ENCODE measurements at regions of chr3 and their contacts with region 1.

Region 1: GRCh38 chr3:72847751-72848702 is at the start of gene SHQ1:
- DNase-seq: peak; percentile 98
- ATAC-seq: peak; percentile 90
- H3K4me3 Mint-ChIP-seq: peak within 1 kb of the TSS; percentile 99
- H3K27ac Mint-ChIP-seq: peak within 1 kb of the TSS; percentile 86
- H3K4me1 Mint-ChIP-seq: peaks cover 54% of the 10 kb centered on the region
- H3K27me3 Mint-ChIP-seq: peaks cover 1% of the 10 kb centered on the region
- total RNA-seq, gene SHQ1: 26.4 to 31.3 TPM

Region 2: DNA sequence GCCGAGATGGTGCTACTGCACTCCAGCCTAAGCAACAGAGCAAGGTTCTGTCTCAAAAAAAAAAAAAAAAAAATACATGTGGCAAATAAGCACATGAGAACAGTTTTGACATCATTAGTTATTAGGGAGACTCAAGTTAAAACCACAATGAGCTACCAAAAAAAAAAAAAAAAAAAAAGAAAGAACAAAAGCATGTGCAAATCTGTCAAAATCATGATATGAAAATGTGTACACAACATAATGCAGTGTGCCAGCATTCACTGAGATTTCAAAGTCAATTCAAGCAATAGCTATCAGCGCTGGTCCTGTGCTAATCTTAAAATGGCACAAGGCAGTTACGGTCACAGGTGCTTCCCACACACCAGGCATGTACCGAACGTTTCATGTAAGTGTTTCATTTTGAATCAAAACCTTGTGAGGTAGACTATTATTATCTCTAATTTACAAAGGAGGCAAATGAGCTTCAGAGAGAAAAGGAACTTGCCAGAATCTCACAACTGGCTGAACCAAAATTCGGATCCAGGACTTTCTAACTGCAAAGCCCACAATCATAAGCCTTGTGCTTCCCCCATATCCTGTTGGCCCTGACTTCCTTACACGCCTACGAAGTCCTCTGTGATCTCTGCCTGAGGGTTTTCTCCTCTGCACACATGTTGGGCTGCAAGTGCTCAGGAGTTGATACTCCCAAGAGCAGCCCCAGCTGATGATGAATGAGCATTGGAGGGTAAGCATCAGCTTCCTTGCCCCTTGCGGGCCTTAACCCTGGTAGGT is 863.0 kb before region 1 on chr3:
- CTCF ChIA-PET with region 1: no interaction called
- POLR2A ChIA-PET with region 1: no interaction called
- intact Hi-C with region 1: loop called in 1 of 2 experiments (anchors 2 kb)
- DNase-seq: peak; percentile 69
- ATAC-seq: peak; percentile 84
- H3K4me3 Mint-ChIP-seq: peak overlapping the region; percentile 1
- H3K27ac Mint-ChIP-seq: peak overlapping the region; percentile 64
- H3K4me1 Mint-ChIP-seq: peaks cover 47% of the 10 kb centered on the region
- H3K27me3 Mint-ChIP-seq: peaks cover 4% of the 10 kb centered on the region

Region 3: GRCh38 chr3:72482589-72483321 is 365.3 kb before region 1 on chr3:
- CTCF ChIA-PET with region 1: no interaction called
- POLR2A ChIA-PET with region 1: no interaction called
- intact Hi-C with region 1: loop called in 1 of 2 experiments (anchors 1 kb)
- DNase-seq: peak; percentile 94
- ATAC-seq: peak; percentile 46
- H3K4me3 Mint-ChIP-seq: peak overlapping the region; percentile 51
- H3K27ac Mint-ChIP-seq: peak overlapping the region; percentile 90
- H3K4me1 Mint-ChIP-seq: peaks cover 73% of the 10 kb centered on the region
- H3K27me3 Mint-ChIP-seq: no peaks in the 10 kb centered on the region

Region 4: DNA sequence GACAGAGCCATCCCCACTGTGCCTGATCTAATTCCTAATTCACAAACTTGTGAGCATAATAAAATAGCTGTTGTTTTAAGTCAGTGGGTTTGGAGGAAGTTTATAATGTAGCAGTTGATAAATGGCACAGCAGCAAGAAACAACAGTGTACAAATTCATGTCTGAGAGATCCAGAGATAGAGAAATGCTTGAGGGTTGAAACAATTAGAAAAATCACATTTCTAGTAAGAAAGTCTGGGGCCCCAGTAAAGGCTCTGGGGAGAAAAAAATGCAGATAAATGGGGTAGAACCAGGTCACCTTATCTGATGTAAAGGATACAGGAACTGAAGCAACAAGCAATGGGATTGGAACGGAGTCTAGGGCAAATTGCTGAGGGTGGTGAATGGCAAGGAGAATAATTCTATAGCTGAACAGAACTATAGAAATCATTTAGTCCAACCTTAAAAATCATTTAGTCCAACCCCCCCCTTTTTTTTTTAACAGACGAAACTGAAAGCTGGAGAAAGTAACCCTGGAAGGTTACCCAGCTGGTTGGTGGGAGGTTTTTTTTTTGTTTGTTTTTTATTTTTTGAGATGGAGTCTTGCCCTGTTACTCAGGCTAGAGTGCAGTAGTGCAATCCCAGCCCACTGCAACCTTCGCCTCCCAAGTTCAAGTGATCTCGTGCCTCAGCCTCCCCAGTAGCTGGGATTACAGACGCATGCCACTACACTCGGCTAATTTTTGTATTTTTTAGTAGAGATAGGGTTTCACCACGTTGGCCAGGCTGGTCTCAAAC is 14.5 kb after region 1 on chr3:
- CTCF ChIA-PET with region 1: interaction called, 12 read pairs
- POLR2A ChIA-PET with region 1: no interaction called
- intact Hi-C with region 1: no loop called
- DNase-seq: no peak
- ATAC-seq: no peak
- H3K4me3 Mint-ChIP-seq: no peak overlapping the region
- H3K27ac Mint-ChIP-seq: no peak overlapping the region
- H3K4me1 Mint-ChIP-seq: no peaks in the 10 kb centered on the region
- H3K27me3 Mint-ChIP-seq: no peaks in the 10 kb centered on the region

Region 5: DNA sequence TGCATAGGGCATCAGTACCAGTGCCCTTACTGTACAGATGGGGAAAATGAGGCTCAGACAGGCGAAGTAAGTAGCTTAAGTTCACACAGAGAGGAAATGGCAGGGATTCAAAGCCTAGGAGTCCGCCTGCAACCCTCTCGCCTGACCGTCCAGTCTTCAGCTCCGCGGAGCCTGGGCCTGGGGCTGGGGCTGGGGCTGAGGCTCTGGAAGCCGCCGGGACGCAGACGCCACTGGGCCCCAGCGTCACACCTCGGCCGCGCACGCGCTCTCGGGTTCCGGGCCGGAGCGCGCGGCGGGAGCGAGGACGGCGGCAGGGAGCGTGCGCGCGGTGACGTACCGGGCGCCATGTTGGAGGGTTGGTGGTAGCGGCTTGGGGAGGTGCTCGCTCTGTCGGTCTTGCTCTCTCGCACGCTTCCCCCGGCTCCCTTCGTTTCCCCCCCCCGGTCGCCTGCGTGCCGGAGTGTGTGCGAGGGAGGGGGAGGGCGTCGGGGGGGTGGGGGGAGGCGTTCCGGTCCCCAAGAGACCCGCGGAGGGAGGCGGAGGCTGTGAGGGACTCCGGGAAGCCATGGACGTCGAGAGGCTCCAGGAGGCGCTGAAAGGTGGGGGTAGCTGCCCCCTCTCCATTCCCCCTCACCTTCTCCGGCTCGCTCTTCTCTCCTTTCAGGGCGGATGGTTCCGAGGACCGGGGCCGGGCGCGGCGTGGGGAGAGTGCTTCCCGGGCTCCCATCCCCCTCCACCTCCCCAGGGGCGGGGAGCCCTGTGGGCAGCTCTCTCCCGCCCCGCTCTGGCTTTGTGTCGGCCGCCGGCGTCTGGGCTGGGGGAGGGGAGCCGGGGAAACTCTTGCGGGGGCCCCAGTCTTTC is 148.7 kb after region 1 on chr3 and contains the start of gene PPP4R2:
- CTCF ChIA-PET with region 1: interaction called, 9 read pairs
- POLR2A ChIA-PET with region 1: interaction called, 3 read pairs
- intact Hi-C with region 1: loop called (anchors 1 to 2 kb)
- DNase-seq: peak; percentile 94
- ATAC-seq: peak; percentile 88
- H3K4me3 Mint-ChIP-seq: peak within 1 kb of the TSS; percentile 85
- H3K27ac Mint-ChIP-seq: peak within 1 kb of the TSS; percentile 93
- H3K4me1 Mint-ChIP-seq: peaks cover 35% of the 10 kb centered on the region
- H3K27me3 Mint-ChIP-seq: no peaks in the 10 kb centered on the region
- total RNA-seq, gene PPP4R2: 75.1 to 91.5 TPM